Heart right ventricle (tissue), 16 donors: ENCODE measurements at regions of chr6 and their contacts with region 1.

Region 1: DNA sequence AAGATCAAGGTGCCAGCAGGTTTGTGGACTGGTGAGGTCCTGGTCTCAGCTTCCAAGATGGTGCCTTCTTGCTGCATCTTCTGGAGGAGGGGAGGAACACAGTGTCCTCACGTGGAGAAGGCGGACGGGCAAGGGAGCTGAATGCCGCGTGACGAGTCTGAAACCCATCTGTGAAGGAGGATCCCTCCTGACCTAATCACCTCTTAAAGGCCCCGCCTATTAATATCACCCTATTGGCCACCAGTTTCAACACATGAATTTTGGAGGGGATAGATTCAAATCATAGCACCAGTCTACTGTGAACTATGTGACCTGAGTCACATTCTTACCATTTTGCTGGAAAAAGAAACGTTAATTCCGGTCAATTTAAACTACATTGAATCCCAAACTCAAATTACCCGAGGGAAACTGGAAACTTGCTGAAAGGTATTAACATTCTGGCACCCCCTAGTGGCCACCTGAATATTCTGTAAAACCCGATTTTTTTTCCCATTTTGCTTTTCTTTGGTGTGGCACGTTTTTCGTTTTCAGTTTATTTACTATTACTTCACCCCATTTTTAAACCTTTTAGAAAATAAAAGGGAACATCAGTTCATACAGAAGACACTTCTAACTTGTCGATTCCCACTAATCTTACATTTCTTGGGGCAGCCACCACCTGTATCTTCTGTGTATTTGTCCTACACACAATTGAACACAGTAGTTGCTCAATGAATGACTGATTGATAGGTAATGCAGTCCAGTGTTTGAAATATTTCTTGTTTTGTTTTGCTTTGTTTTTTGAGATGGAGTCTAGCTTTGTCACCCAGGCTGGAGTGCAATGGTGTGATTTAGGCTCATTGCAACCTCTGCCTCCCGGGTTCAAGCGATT is 17.9 kb upstream of the CCDC170 start:
- DNase-seq: peak in 1 of 2 donors; percentile 43
- ATAC-seq: peak in 1 of 8 donors; percentile 35
- H3K4me3 ChIP-seq: peak overlapping the region in 4 of 10 donors; percentile 15 to 23 (median 18)
- H3K27ac ChIP-seq: no peak overlapping the region
- H3K4me1 ChIP-seq: peaks cover 0 to 9% (median 5%) of the 10 kb centered on the region in 9 donors
- H3K27me3 ChIP-seq: no peaks in the 10 kb centered on the region
- CTCF ChIP-seq: peak; percentile 66 to 87 (median 80)

Region 2: GRCh38 chr6:151014404-151015100 is 461.3 kb before region 1 on chr6:
- intact Hi-C with region 1: loop called in 1 of 10 experiments (anchors 10 kb)
- DNase-seq: peak; percentile 61 to 68
- ATAC-seq: peak; percentile 59 to 84 (median 79)
- H3K4me3 ChIP-seq: peak overlapping the region in 4 of 10 donors; percentile 13 to 20 (median 18)
- H3K27ac ChIP-seq: no peak overlapping the region
- H3K4me1 ChIP-seq: peaks cover 0 to 7% (median 0%) of the 10 kb centered on the region in 9 donors
- H3K27me3 ChIP-seq: no peaks in the 10 kb centered on the region
- CTCF ChIP-seq: peak; percentile 96 to 100 (median 98)

Region 3: GRCh38 chr6:151409260-151409659 is 66.6 kb before region 1 on chr6:
- intact Hi-C with region 1: loop called in 4 of 10 experiments (anchors 5 to 10 kb)
- DNase-seq: no peak
- ATAC-seq: no peak
- H3K4me3 ChIP-seq: no peak overlapping the region
- H3K27ac ChIP-seq: no peak overlapping the region
- H3K4me1 ChIP-seq: peaks cover 0 to 17% (median 0%) of the 10 kb centered on the region in 9 donors
- H3K27me3 ChIP-seq: no peaks in the 10 kb centered on the region
- CTCF ChIP-seq: no peak

Region 4: DNA sequence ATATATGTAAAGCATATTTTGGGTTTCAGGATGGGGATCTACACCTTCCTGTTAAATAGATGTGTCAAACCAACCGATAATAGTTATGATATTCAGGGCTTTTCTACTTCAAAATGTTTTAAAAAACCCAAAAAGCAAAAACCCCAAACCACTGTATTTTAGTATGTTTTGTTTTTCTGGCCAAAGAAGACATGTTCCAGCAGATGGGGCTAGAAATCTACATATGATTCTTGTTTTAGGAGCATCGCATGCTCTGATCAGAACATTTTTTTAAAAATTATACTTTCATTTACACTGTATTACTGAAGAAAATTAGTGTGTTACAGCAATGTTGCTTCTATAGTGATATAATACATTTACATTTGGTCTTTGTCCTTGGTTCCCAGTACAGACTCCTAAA is 35.0 kb before region 1 on chr6:
- intact Hi-C with region 1: loop called in 3 of 10 experiments (anchors 2 to 5 kb)
- DNase-seq: no peak
- ATAC-seq: no peak
- H3K4me3 ChIP-seq: peak overlapping the region in 1 of 10 donors; percentile 5
- H3K27ac ChIP-seq: peak overlapping the region in 3 of 10 donors; percentile 42 to 44 (median 43)
- H3K4me1 ChIP-seq: peaks cover 4 to 77% (median 37%) of the 10 kb centered on the region in 9 donors
- H3K27me3 ChIP-seq: no peaks in the 10 kb centered on the region
- CTCF ChIP-seq: peak in 8 of 9 donors; percentile 8 to 65 (median 52)

Region 5: GRCh38 chr6:151534576-151534975 is 58.7 kb after region 1 on chr6:
- intact Hi-C with region 1: no loop called
- DNase-seq: no peak
- ATAC-seq: no peak
- H3K4me3 ChIP-seq: no peak overlapping the region
- H3K27ac ChIP-seq: no peak overlapping the region
- H3K4me1 ChIP-seq: peaks cover 0 to 14% (median 0%) of the 10 kb centered on the region in 9 donors
- H3K27me3 ChIP-seq: no peaks in the 10 kb centered on the region
- CTCF ChIP-seq: no peak